Sciatic nerve (tissue), 2 donors: ENCODE measurements at regions of chr16 and their contacts with region 1.

Region 1: DNA sequence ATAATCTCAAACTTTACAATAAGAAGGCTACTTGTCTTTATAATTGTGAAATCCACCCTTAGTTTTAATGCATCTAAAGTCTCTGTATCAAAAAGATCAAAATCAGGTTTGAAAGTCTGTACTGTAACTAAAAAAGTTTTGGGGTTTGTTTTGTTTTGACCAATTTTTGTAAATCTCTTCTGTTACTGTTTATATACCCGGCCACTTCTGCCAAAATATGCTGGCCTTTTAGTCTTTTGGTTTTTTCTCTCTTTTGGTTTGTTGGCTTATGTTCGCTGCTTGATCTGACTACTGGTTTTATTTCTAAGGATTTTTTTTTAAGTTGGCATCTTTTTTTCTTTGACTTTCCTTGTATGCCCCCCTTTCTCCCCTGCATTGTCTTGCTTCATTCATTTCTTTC is 655.2 kb downstream of the MAF start:
- DNase-seq: no peak
- ATAC-seq: no peak

Region 2: DNA sequence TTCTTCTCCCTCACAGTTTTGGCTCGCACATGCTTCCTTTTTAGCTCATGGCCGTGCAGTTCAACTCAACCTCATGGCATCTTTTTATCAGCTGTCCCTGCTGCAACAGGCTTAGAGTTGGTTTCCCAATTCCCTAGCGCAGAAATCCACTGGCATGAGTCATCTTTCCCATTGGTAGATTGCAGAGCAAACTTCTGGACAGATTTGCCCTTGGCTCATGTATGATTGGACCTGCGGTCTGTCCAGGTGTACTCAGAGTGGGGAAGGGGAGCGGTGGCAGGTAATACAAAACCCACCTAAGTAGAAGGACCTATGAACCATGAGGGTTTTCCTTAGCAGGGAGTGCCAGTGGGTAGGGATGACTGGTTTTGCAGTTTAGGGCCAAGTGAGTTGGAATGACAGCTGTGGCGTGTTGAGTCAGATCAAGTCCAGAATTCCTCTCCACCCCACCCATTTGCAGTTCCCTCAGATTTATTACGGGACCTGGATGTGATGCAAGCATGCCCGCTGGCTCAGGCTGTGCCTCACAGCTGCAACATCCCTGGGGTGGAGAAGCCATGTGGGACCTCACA is 261.2 kb before region 1 on chr16:
- intact Hi-C with region 1: no loop called
- DNase-seq: no peak
- ATAC-seq: peak; percentile 77

Region 3: GRCh38 chr16:78900044-78900811 is 45.1 kb before region 1 on chr16:
- intact Hi-C with region 1: no loop called
- DNase-seq: no peak
- ATAC-seq: no peak

Region 4: GRCh38 chr16:80804451-80805383 is 1859.4 kb after region 1 on chr16 and contains the start of gene CDYL2:
- intact Hi-C with region 1: loop called (anchors 5 kb)
- DNase-seq: no peak
- ATAC-seq: no peak
- total RNA-seq, gene CDYL2: 5.7 TPM